Body of pancreas (tissue), 4 donors: ENCODE measurements at regions of chr4 and their contacts with region 1.

Region 1: GRCh38 chr4:156971676-156972378 is at the start of gene PDGFC:
- DNase-seq: peak; percentile 79 to 84 (median 82)
- ATAC-seq: peak; percentile 86
- H3K4me3 ChIP-seq: peak within 1 kb of the TSS; percentile 49 to 82
- H3K27ac ChIP-seq: peak within 1 kb of the TSS; percentile 87 to 97 (median 92)
- H3K4me1 ChIP-seq: peaks cover 41% of the 10 kb centered on the region
- H3K27me3 ChIP-seq: no peaks in the 10 kb centered on the region
- CTCF ChIP-seq: peak in 6 of 7 experiments; percentile 21 to 69 (median 56)
- POLR2A ChIP-seq: peak; percentile 66 to 77 (median 75)
- total RNA-seq, gene PDGFC: 19.1 to 21.8 TPM

Region 2: DNA sequence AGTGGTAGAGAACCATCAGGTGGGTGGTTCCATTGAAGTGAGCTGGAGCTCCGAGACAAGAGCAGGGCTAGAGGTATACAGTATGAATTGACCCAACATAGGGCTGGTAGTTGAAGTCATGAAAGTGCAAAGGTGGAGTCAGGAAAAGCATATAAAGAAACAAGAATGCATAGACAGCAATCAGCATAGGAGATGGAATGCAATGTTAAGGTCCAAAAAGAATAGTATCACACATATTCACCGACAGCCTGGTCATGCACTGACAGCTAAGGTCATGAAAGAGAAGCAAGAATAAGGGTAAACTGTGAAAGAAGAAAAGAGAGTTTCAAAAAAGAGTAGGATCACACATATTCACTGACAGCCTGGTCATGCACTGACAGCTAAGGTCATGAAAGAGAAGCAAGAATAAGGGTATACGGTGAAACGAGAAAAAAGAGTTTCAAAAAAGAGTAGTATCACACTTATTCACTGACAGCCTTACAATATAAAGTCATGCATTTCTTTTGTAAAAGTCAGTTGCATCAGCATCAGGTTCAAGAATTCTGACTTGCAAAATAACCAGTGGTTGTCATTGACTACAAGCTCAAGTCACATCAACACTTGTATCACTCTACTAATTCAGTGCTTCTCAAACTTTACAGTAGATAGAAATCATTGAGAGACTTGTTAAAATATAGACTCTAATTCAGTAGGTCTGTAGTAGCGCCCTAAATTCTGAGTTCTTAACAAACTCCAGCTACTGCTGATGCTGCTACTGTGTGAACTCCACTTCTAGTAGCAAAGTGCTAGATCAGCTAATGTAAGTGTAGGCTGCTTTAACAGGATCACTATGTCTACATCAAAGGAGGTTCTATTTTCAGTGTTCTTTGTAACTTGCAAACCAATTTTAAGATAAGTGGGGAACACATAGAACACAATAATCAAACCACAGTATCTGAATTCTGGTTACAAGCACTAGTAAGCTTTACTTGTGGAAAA is 222.1 kb before region 1 on chr4:
- intact Hi-C with region 1: no loop called
- DNase-seq: no peak
- ATAC-seq: no peak
- H3K4me3 ChIP-seq: no peak overlapping the region
- H3K27ac ChIP-seq: no peak overlapping the region
- H3K4me1 ChIP-seq: no peaks in the 10 kb centered on the region
- H3K27me3 ChIP-seq: no peaks in the 10 kb centered on the region
- CTCF ChIP-seq: no peak
- POLR2A ChIP-seq: no peak

Region 3: DNA sequence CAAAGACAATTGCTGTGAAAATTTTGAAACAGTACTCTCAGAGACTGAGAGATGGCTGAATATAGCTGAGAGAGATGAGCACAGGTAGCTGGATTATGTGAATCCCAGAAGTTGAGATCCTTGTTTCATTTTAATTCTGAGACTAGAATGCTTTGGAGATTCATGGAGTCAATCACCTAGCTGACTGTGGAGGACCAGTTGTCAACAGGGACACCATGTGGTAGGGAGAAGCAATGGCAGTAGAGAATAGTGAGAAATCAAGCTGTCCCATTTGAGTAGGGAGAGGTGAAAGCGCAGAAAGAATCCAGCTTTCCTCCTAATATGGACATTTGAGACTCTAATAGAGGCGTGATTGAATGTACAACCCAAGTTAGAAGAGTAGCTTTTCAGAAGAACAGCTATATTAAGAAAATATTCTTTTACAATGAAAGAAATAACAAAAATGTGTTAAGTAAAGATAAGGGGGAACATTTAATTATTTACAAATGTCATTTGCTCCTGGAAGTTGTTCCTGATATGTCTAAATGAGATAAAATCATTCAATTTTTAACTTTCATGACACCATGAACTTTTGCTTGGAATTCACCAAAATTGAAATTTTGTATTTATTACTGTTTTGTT is 73.8 kb after region 1 on chr4:
- intact Hi-C with region 1: loop called (anchors 10 kb)
- DNase-seq: peak; percentile 33 to 70 (median 52)
- ATAC-seq: peak; percentile 98
- H3K4me3 ChIP-seq: no peak overlapping the region
- H3K27ac ChIP-seq: no peak overlapping the region
- H3K4me1 ChIP-seq: no peaks in the 10 kb centered on the region
- H3K27me3 ChIP-seq: no peaks in the 10 kb centered on the region
- CTCF ChIP-seq: peak; percentile 41 to 92 (median 89)
- POLR2A ChIP-seq: no peak

Region 4: DNA sequence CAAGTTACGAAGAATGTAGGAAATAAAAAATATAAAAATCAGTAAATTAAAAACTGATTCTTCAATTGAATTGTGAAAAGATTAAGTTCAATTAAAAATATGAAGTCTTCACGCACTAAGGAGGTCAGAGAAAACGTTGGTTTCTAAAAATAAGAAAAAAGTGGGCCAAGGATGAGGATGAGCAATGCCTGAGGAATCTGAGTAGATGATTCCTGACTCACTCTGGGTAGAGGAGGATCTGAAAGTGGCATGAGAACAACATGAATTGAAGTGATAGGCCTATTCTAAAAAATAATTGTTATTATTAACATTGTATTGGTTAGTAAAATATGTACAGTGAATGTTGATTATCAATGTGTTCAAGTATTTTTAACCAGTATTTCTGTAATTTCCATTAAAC is 692.9 kb after region 1 on chr4:
- intact Hi-C with region 1: no loop called
- DNase-seq: no peak
- ATAC-seq: no peak
- H3K4me3 ChIP-seq: no peak overlapping the region
- H3K27ac ChIP-seq: no peak overlapping the region
- H3K4me1 ChIP-seq: no peaks in the 10 kb centered on the region
- H3K27me3 ChIP-seq: no peaks in the 10 kb centered on the region
- CTCF ChIP-seq: no peak
- POLR2A ChIP-seq: no peak